Mammary epithelial cell (primary cell): ENCODE measurements at regions of chrX and their contacts with region 1.

Region 1: DNA sequence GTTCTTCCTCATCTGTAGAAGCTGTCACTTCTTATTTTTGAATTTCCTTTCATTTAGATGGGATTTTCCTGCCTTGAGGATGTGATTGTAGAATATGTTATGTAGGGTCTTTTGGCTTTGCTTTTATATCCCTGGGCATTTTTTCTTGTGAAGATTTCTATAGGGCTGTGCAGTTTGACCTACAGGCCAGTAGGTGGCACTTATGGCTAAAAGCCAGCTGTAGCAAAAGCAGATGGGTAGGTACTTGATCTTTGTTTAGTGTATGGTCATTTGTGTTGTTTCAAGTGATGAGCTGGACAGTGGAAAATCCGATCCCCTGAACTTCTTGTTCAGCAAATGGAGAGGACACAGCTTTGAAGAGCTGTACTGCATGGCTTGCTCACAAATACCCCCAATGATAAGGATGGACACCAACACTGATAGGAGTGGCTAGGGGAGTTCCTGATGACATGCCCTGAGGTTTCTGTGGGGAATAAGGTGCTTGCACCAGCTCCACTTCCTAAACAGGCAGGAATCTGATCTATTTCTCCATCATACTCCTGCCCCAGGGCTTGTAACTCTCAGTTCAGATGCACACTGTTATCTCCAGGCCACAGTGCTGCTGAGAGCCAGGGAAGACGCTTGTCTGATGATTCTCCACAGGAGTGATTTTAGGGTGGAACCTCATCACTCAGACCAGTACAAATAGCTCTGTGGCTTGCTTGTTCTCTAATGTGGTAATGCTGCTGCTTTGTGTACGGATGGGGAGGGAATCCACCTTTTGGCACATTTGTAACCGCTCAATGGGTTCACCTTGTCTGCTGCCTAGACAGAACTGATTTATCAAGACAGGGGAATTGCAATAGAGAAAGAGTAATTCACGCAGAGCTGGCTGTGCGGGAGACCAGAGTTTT is 417.1 kb upstream of the MAGEB16 start:
- DNase-seq: peak; percentile 42
- H3K4me3 ChIP-seq: no peak overlapping the region
- H3K27ac ChIP-seq: no peak overlapping the region
- H3K4me1 ChIP-seq: no peaks in the 10 kb centered on the region
- H3K27me3 ChIP-seq: peaks cover 2% of the 10 kb centered on the region
- CTCF ChIP-seq: peak; percentile 86 to 90

Region 2: DNA sequence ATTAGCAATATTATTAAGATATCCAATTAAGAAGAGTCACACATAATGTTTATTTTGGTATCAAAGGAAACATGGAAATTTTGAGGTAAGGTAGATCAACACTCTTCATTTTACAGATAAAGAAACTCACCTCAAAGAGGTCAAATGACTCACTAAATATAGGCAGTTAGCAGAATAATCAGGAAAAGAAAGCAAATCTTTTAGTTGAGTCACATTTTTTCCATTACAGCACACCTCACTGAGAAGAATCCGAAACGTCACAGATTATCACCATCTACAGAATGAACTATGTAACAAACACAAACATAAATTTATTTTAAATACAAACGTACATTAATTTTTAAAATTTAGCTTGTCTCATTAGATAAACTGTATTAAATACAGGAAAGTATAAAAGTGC is 794.1 kb before region 1 on chrX:
- CTCF ChIA-PET with region 1: no interaction called
- dilution Hi-C with region 1: no loop called
- in situ Hi-C with region 1: no loop called
- intact Hi-C with region 1: no loop called
- DNase-seq: no peak
- H3K4me3 ChIP-seq: no peak overlapping the region
- H3K27ac ChIP-seq: no peak overlapping the region
- H3K4me1 ChIP-seq: no peaks in the 10 kb centered on the region
- H3K27me3 ChIP-seq: peaks cover 2% of the 10 kb centered on the region
- CTCF ChIP-seq: no peak

Region 3: GRCh38 chrX:34927861-34928260 is 453.2 kb before region 1 on chrX:
- CTCF ChIA-PET with region 1: no interaction called
- dilution Hi-C with region 1: no loop called
- in situ Hi-C with region 1: no loop called
- intact Hi-C with region 1: no loop called
- DNase-seq: peak; percentile 42
- H3K4me3 ChIP-seq: no peak overlapping the region
- H3K27ac ChIP-seq: no peak overlapping the region
- H3K4me1 ChIP-seq: no peaks in the 10 kb centered on the region
- H3K27me3 ChIP-seq: peaks cover 5% of the 10 kb centered on the region
- CTCF ChIP-seq: no peak

Region 4: DNA sequence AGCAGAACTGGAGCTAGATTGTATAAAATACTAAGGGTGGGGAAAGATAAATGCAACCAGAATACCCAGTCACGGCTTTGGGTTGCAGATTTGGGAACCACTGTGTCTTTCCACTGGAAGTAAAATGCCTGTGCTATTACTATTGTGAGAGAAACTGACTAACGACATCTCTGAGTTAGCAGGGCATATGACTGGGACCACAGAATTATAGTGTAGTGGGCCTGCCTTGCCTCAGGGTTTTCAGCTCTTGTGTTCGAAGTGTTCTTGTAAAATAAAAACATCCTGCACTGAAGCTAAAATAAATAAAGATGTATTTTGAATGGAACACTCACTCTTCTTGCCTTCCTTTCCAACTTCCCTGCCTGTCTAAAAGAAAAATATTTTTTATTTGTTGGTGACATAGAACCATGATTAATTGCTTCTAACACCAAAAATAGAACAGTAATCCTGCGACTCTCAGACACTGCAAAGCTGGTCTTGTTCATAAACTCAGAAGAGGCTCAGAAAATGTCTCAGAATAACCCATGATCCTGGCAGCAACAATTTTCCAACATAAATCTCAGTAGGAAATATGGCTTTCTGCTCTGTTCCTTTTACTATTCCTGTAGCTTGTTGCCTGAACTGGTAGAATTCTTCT is 334.3 kb before region 1 on chrX:
- CTCF ChIA-PET with region 1: no interaction called
- dilution Hi-C with region 1: no loop called
- in situ Hi-C with region 1: no loop called
- intact Hi-C with region 1: no loop called
- DNase-seq: no peak
- H3K4me3 ChIP-seq: no peak overlapping the region
- H3K27ac ChIP-seq: no peak overlapping the region
- H3K4me1 ChIP-seq: no peaks in the 10 kb centered on the region
- H3K27me3 ChIP-seq: peaks cover 2% of the 10 kb centered on the region
- CTCF ChIP-seq: no peak

Region 5: GRCh38 chrX:35416783-35417182 is 35.7 kb after region 1 on chrX:
- CTCF ChIA-PET with region 1: no interaction called
- dilution Hi-C with region 1: no loop called
- in situ Hi-C with region 1: no loop called
- intact Hi-C with region 1: no loop called
- DNase-seq: no peak
- H3K4me3 ChIP-seq: no peak overlapping the region
- H3K27ac ChIP-seq: no peak overlapping the region
- H3K4me1 ChIP-seq: no peaks in the 10 kb centered on the region
- H3K27me3 ChIP-seq: no peaks in the 10 kb centered on the region
- CTCF ChIP-seq: no peak

Region 6: GRCh38 chrX:35726176-35726575 is 345.1 kb after region 1 on chrX:
- CTCF ChIA-PET with region 1: no interaction called
- dilution Hi-C with region 1: no loop called
- in situ Hi-C with region 1: loop called (anchors 25 kb)
- intact Hi-C with region 1: loop called (anchors 1 kb)
- DNase-seq: peak; percentile 9
- H3K4me3 ChIP-seq: no peak overlapping the region
- H3K27ac ChIP-seq: no peak overlapping the region
- H3K4me1 ChIP-seq: no peaks in the 10 kb centered on the region
- H3K27me3 ChIP-seq: peaks cover 2% of the 10 kb centered on the region
- CTCF ChIP-seq: peak; percentile 35 to 54